ENCODE measurements at regions of chr7 and their contacts with region 1.

Region 1: GRCh38 chr7:105278973-105279687 is 109.6 kb downstream of the SRPK2 start:
- DNase-seq: no peak
- ATAC-seq: no peak

Region 2: DNA sequence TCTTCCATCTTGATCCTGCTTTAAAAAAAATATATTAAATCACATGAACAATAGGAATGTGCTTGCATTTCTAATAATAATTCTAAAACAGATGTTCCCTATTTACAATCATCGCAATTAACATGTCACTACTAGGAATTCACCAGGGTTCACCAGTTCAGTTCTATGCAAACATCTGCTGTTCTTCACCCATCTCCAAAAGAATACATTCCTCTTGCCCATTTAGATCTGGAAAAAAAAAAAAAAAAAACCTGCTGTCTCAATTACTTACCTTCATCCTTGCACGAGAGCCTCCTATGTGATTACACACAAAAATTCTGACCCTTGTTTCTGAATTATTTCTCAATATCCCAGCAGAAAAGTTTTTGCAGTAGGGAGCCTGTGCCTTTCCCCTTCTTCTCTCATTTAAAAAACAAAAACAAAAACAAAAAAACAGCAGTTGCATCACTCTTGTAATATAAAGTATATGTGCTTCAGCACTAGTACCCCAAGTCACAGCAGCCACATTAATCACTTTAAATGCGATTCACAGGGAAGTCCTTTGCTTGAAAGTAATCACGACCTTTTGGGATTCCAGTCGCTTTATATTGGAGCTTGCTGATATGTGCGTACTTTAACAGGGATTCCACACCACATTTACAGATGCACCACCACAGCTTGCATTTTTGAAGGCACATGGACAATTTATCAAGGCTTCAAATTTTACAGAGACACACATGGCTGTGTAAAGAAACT is 459.8 kb before region 1 on chr7:
- intact Hi-C with region 1: no loop called
- DNase-seq: no peak
- ATAC-seq: no peak

Region 3: GRCh38 chr7:105202616-105203015 is 76.5 kb before region 1 on chr7:
- intact Hi-C with region 1: loop called (anchors 5 kb)
- DNase-seq: no peak
- ATAC-seq: no peak

Region 4: DNA sequence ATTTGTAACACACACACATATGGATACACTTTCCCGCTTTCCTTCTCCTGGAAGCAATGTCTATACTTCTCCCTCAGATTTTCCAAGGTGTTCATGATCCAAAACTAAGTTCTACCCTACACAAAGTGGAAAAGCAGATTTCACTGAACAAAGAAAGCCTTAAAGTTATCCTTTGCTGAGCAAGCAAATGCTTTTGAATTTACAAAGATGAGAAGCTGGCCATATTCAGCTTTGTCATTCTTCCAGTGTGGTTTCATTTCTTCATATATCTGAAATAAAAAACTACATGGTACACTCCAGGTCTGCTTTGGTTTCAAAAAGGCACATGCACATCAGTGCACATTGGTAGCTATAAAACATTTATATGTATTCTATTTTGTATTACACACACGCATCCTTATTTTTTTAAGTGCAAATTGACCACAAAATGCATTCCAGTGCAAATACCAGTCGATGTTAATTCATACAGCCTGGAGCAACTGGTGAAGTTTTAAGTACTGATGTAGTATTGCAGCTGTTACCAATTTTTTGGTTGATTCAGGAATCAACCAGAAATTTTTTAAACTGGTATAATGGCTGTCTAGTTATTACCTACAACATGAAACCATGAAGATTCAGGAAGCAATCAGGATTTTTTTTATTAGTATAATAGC is 175.1 kb after region 1 on chr7:
- intact Hi-C with region 1: no loop called
- DNase-seq: no peak
- ATAC-seq: no peak